Activated CD4-positive, alpha-beta memory T cell treated with anti-CD3 and anti-CD28 coated beads, Interleukin-2, amount 10 ng/mL, durations not matched to agents 7 days and 5 days (primary cell): ENCODE measurements at regions of chr9 and their contacts with region 1.

Region 1: GRCh38 chr9:113591001-113591898 is 127.7 kb downstream of the RGS3 start:
- DNase-seq: peak; percentile 71
- H3K4me3 Mint-ChIP-seq: no peak overlapping the region
- H3K27ac Mint-ChIP-seq: no peak overlapping the region
- H3K4me1 Mint-ChIP-seq: peaks cover 48% of the 10 kb centered on the region
- H3K27me3 Mint-ChIP-seq: no peaks in the 10 kb centered on the region

Region 2: GRCh38 chr9:113401027-113401792 is 190.0 kb before region 1 on chr9 and contains the start of gene ALAD:
- CTCF ChIA-PET with region 1: interaction called, 11 read pairs
- POLR2A ChIA-PET with region 1: no interaction called
- DNase-seq: peak; percentile 99
- H3K4me3 Mint-ChIP-seq: peak within 1 kb of the TSS; percentile 92
- H3K27ac Mint-ChIP-seq: peak within 1 kb of the TSS; percentile 78
- H3K4me1 Mint-ChIP-seq: peaks cover 23% of the 10 kb centered on the region
- H3K27me3 Mint-ChIP-seq: no peaks in the 10 kb centered on the region
- total RNA-seq, gene ALAD: 25.1 to 29.0 TPM

Region 3: DNA sequence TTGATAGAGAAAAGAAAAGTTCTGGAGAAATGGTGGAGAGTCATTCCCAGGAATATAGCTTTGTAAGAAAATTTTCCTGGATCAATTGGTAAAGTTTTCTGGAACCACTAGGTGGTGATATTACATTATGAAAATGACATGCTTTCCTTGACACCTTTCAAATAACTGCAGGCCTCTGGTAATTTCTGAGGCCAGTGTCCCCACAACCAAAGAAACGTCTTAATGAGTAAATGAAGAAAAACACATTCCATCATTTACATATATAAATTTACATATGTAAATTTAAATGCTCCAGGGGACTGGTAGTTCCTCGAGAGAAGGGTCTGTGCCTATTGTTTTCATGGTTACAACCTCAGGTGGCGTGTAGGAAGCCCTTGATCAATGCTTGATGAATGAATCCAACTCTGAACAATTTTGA is 144.9 kb before region 1 on chr9:
- CTCF ChIA-PET with region 1: interaction called, 44 read pairs
- POLR2A ChIA-PET with region 1: no interaction called
- DNase-seq: no peak
- H3K4me3 Mint-ChIP-seq: no peak overlapping the region
- H3K27ac Mint-ChIP-seq: no peak overlapping the region
- H3K4me1 Mint-ChIP-seq: no peaks in the 10 kb centered on the region
- H3K27me3 Mint-ChIP-seq: no peaks in the 10 kb centered on the region

Region 4: GRCh38 chr9:113511856-113512761 is 79.1 kb before region 1 on chr9:
- CTCF ChIA-PET with region 1: interaction called, 10 read pairs
- POLR2A ChIA-PET with region 1: no interaction called
- DNase-seq: peak; percentile 79
- H3K4me3 Mint-ChIP-seq: peak overlapping the region; percentile 23
- H3K27ac Mint-ChIP-seq: peak overlapping the region; percentile 86
- H3K4me1 Mint-ChIP-seq: peaks cover 46% of the 10 kb centered on the region
- H3K27me3 Mint-ChIP-seq: peaks cover 3% of the 10 kb centered on the region

Region 5: DNA sequence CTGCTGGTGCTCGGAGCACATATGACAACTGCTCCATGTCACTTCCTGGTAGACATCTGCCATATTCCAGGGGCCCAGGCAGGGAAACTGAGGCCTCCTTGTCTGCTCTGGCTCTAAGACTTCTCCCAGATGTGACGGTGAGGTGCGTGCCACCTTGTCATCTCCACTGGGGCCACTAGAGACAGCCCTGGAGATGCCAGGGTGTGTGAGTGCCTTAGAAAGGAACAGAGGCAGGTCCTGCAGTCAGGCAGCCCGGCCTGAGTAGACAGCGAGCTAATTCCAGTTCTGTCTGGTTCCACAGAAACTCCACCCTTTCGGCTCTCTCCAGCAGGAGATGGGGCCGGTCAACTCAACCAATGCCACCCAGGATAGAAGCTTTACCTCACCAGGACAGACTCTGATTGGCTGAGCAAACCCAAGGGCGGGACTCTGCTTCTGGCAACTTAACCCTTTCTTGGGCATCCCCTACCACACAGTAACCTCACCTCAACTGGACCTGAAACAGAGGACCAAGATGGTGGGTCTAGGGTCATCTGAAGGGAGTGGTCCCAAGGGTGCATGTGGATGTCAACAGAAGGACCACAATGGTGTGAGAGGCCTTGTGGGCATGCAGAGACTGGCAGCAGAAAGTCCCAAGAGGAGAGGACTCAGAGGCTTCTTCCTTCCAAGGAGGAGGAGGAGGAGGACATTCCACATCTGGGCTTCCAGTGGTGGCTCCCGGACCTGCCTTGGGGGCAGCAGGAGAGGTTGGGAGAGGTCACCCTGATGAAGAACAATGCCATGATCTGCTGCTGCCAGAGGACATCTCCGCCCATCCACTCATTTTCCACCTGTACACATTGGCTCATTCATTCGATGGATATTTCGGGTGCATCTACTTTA is 50.0 kb before region 1 on chr9:
- CTCF ChIA-PET with region 1: no interaction called
- POLR2A ChIA-PET with region 1: no interaction called
- DNase-seq: no peak
- H3K4me3 Mint-ChIP-seq: no peak overlapping the region
- H3K27ac Mint-ChIP-seq: no peak overlapping the region
- H3K4me1 Mint-ChIP-seq: no peaks in the 10 kb centered on the region
- H3K27me3 Mint-ChIP-seq: no peaks in the 10 kb centered on the region

Region 6: DNA sequence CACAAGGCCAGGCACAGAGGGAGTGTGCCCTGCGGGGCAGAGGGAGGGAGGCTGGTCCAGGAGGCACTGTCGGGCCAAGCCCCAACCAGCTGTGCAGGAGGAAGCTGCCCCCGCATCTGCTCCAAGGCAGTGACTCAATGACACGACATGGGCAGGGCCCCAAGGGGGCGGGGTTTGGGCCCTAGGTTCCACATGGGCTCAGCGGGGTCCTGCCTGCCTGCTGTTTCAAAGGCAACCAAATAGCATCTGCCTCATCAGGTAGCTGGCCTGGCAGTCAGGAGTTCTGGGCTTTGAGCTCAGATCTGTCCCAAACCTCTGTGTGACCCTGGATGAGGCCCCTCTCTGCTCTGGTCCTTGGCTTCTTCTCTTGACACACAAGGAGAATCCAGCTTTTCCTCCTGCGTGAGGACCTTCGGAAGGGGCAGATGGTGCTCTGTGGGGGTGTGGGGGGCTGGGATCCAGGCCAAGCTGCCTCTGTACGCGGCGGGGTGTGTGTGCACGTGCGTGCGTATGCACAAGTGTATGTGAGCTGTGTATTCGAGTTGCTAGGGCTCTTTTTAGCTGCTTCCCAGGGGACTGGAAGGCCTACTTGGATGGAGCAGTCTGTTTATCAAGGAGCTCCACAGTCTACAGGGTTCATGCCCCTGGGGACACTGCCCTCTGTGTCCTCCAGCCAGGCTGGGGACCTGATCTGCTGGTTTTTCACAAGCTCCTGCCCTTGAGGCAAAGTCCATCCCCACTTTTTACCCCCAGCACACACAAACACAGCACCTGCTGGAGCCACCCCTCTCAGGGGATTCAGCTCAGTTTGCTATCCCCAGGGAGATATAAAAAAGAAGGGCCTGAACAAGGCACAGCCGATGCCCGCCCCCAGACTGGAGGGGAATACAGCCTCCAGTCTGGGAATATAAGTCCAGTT is 11.1 kb after region 1 on chr9:
- CTCF ChIA-PET with region 1: interaction called, 29 read pairs
- POLR2A ChIA-PET with region 1: no interaction called
- DNase-seq: peak; percentile 39
- H3K4me3 Mint-ChIP-seq: no peak overlapping the region
- H3K27ac Mint-ChIP-seq: no peak overlapping the region
- H3K4me1 Mint-ChIP-seq: peaks cover 4% of the 10 kb centered on the region
- H3K27me3 Mint-ChIP-seq: no peaks in the 10 kb centered on the region

Region 7: DNA sequence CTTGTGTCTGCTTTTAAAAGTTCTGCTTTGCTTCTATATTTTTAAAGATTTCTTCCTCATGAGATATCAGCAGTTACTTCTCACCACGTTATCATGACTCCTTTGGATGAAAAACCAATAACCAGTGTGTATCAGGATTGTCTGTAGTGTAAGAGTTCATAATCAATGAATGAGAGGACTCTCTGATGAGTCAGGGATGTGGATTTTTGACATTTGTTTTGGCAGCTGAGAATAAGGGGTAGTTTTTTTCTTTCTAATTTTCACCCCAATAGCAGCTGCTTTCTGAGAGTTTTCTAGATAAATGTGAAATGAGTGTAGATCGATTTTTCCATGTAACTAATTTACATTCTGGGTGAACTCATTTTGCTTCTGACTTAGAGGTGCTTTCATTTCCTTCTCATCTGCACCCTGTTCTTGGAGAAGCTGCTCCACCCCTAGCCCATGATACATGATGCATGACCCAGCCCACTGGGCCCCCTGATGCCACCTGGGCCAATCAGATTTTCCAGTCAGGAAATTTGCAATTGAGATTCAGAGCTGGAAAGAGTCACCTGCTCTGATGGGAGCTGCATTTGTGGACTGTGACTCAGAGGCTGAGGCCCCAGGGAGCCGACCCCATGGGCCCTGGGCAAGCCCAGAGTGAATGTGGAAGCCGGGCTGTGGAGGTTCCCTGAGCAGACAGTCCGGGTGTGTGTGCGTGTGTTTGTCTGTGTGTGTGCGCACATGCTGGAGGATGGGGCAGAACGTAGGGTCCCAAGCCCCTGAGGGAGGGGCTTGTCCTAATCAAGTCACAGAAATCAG is 31.6 kb after region 1 on chr9:
- CTCF ChIA-PET with region 1: interaction called, 10 read pairs
- POLR2A ChIA-PET with region 1: no interaction called
- DNase-seq: peak; percentile 48
- H3K4me3 Mint-ChIP-seq: no peak overlapping the region
- H3K27ac Mint-ChIP-seq: peak overlapping the region; percentile 67
- H3K4me1 Mint-ChIP-seq: peaks cover 27% of the 10 kb centered on the region
- H3K27me3 Mint-ChIP-seq: no peaks in the 10 kb centered on the region

Region 8: GRCh38 chr9:113657703-113658544 is 66.7 kb after region 1 on chr9:
- CTCF ChIA-PET with region 1: interaction called, 186 read pairs
- POLR2A ChIA-PET with region 1: interaction called, 4 read pairs
- DNase-seq: peak; percentile 81
- H3K4me3 Mint-ChIP-seq: no peak overlapping the region
- H3K27ac Mint-ChIP-seq: no peak overlapping the region
- H3K4me1 Mint-ChIP-seq: peaks cover 7% of the 10 kb centered on the region
- H3K27me3 Mint-ChIP-seq: peaks cover 34% of the 10 kb centered on the region